MCF 10A (cell line): ENCODE measurements at regions of chr1 and their contacts with region 1.

Region 1: GRCh38 chr1:200971955-200972711 is 51.4 kb downstream of the KIF21B start:
- DNase-seq: peak; percentile 80
- H3K4me3 Mint-ChIP-seq: no peak overlapping the region
- H3K27ac Mint-ChIP-seq: no peak overlapping the region
- H3K4me1 Mint-ChIP-seq: peaks cover 14% of the 10 kb centered on the region
- H3K27me3 Mint-ChIP-seq: no peaks in the 10 kb centered on the region
- CTCF ChIP-seq: peak; percentile 100

Region 2: DNA sequence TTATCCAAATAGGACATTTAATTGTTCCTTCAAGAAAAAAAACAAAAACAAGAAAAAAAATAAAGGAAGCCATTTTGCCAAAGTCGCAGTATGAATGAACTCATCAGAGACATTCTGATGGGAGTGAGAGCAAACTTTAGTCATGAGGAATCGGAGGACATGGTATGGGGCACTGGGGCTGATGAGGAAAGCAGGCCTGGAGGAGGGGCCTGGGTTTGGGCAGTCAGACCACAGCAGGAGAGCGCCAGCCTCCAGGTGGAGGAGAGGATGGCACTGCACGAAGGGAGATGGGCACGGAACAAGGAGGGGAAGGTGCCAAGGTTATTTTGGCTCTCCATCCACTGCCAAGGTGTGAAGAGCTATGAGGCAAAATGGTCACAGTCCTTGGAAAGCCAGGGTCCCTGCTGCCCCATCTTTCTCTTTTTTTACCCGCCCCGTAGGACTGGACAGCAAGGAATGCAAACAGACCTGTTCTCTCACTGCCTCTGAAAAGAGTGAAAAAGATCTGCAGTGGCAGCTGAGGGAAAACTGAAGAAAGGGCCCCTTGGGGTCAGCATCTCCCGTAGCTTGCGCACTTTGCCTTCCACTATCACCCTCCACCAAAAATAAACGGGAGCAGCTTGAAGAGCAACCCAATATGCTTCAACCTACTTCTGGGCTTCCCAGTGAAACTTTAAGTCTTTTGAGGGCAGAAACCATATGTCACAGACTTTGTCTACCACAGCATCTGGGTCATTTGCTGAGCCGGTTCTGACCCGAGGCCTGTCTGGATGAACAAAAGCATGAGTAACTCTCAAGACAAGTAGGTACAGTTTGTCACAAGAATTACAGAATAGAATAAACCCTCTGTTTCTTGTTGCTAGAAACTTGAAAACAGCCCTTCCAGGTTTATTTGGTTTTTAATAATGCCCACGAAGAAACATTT is 342.3 kb before region 1 on chr1:
- CTCF ChIA-PET with region 1: no interaction called
- POLR2A ChIA-PET with region 1: no interaction called
- intact Hi-C with region 1: no loop called
- DNase-seq: no peak
- H3K4me3 Mint-ChIP-seq: no peak overlapping the region
- H3K27ac Mint-ChIP-seq: no peak overlapping the region
- H3K4me1 Mint-ChIP-seq: peaks cover 7% of the 10 kb centered on the region
- H3K27me3 Mint-ChIP-seq: no peaks in the 10 kb centered on the region
- CTCF ChIP-seq: no peak

Region 3: GRCh38 chr1:200890818-200891773 is 81.0 kb before region 1 on chr1:
- CTCF ChIA-PET with region 1: interaction called, 29 read pairs
- POLR2A ChIA-PET with region 1: interaction called, 6 read pairs
- intact Hi-C with region 1: loop called (anchors 2 kb)
- DNase-seq: peak; percentile 81
- H3K4me3 Mint-ChIP-seq: peak overlapping the region; percentile 80
- H3K27ac Mint-ChIP-seq: peak overlapping the region; percentile 83
- H3K4me1 Mint-ChIP-seq: peaks cover 59% of the 10 kb centered on the region
- H3K27me3 Mint-ChIP-seq: no peaks in the 10 kb centered on the region
- CTCF ChIP-seq: peak; percentile 61

Region 4: GRCh38 chr1:200951016-200951415 is 21.1 kb before region 1 on chr1:
- CTCF ChIA-PET with region 1: interaction called, 80 read pairs
- POLR2A ChIA-PET with region 1: no interaction called
- intact Hi-C with region 1: no loop called
- DNase-seq: no peak
- H3K4me3 Mint-ChIP-seq: no peak overlapping the region
- H3K27ac Mint-ChIP-seq: no peak overlapping the region
- H3K4me1 Mint-ChIP-seq: no peaks in the 10 kb centered on the region
- H3K27me3 Mint-ChIP-seq: no peaks in the 10 kb centered on the region
- CTCF ChIP-seq: no peak

Region 5: DNA sequence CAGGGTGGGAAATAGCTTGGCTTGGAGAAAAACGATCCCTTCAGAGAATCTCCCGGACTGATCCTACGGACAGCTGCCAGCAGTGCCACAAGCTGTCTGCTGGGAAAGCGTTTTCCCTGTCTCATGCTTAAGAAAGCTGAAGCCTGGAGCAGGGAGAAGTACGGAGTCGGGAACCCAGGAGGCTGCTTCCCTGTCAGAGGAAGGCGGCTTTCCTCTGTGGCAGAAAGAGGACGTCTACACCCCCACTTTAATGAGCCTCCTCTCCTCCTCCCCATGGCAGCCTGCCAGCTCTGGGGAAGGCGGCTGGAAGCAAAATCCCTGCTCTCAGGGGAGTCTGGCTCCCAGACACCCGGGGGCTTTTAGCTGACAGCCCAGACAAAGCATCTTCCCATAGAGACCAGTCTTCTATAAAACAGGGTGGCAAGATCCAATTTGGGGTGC is 44.1 kb after region 1 on chr1:
- CTCF ChIA-PET with region 1: interaction called, 47 read pairs
- POLR2A ChIA-PET with region 1: no interaction called
- intact Hi-C with region 1: no loop called
- DNase-seq: peak; percentile 46
- H3K4me3 Mint-ChIP-seq: no peak overlapping the region
- H3K27ac Mint-ChIP-seq: no peak overlapping the region
- H3K4me1 Mint-ChIP-seq: peaks cover 32% of the 10 kb centered on the region
- H3K27me3 Mint-ChIP-seq: no peaks in the 10 kb centered on the region
- CTCF ChIP-seq: no peak

Region 6: DNA sequence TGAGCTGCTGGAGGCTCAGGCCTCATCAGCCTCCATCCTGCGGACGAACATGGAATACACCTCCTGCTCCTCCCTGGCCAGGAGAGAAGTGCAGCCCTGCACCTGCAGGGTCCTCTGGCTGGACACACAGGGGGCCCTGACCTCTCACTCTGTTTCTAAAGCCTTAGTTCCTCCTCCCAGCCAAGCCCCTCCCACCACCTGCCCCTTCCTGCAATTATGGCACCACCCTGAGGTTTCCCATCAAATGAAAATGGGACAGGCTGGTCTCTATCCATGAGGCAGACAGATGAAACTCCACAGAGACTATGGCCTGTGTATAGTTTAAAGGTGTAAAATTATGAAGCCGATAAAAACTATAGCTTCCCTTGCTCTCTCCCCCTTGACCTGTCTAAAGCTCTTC is 97.5 kb after region 1 on chr1:
- CTCF ChIA-PET with region 1: interaction called, 12 read pairs
- POLR2A ChIA-PET with region 1: no interaction called
- intact Hi-C with region 1: no loop called
- DNase-seq: peak; percentile 26
- H3K4me3 Mint-ChIP-seq: no peak overlapping the region
- H3K27ac Mint-ChIP-seq: no peak overlapping the region
- H3K4me1 Mint-ChIP-seq: peaks cover 7% of the 10 kb centered on the region
- H3K27me3 Mint-ChIP-seq: peaks cover 49% of the 10 kb centered on the region
- CTCF ChIP-seq: no peak

Region 7: GRCh38 chr1:201206176-201206575 is 234.0 kb after region 1 on chr1:
- CTCF ChIA-PET with region 1: interaction called, 12 read pairs
- POLR2A ChIA-PET with region 1: no interaction called
- intact Hi-C with region 1: no loop called
- DNase-seq: no peak
- H3K4me3 Mint-ChIP-seq: no peak overlapping the region
- H3K27ac Mint-ChIP-seq: no peak overlapping the region
- H3K4me1 Mint-ChIP-seq: no peaks in the 10 kb centered on the region
- H3K27me3 Mint-ChIP-seq: peaks cover 61% of the 10 kb centered on the region
- CTCF ChIP-seq: no peak